ENCODE measurements at regions of chr6 and their contacts with region 1.

Region 1: DNA sequence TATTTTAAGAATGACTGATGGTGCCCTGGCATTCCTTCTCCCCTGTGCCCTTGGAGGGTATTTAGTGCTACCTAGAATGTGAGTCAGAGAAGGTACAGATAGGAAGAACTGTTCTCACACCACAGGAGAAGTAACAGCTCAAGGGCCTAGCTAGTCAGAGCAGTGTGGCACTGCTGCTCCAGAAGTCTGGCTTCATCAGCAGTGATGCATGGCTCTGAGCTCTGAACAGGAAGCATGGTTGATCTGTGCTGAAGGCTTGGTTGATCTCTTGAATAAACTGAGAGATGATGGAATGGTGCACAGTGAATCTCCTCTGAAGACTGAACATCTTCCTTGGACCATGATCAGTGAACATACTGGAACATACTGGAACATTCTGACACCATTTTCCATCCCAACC is 425.3 kb upstream of the SLC35B3 start:
- DNase-seq: no peak
- H3K4me3 ChIP-seq: no peak overlapping the region
- H3K27ac ChIP-seq: no peak overlapping the region
- H3K4me1 ChIP-seq: no peaks in the 10 kb centered on the region
- H3K27me3 ChIP-seq: no peaks in the 10 kb centered on the region
- CTCF ChIP-seq: no peak

Region 2: GRCh38 chr6:8809662-8810061 is 51.0 kb before region 1 on chr6:
- CTCF ChIA-PET with region 1: no interaction called
- dilution Hi-C with region 1: loop called (anchors 5 kb)
- in situ Hi-C with region 1: no loop called
- intact Hi-C with region 1: no loop called
- DNase-seq: no peak
- H3K4me3 ChIP-seq: no peak overlapping the region
- H3K27ac ChIP-seq: no peak overlapping the region
- H3K4me1 ChIP-seq: no peaks in the 10 kb centered on the region
- H3K27me3 ChIP-seq: no peaks in the 10 kb centered on the region
- CTCF ChIP-seq: no peak

Measured in mammary epithelial cell (primary cell).